ENCODE measurements at regions of chr9 and their contacts with region 1.

Region 1: GRCh38 chr9:8188720-8189407 is 389.3 kb upstream of the DMAC1 start:
- DNase-seq: no peak

Region 2: DNA sequence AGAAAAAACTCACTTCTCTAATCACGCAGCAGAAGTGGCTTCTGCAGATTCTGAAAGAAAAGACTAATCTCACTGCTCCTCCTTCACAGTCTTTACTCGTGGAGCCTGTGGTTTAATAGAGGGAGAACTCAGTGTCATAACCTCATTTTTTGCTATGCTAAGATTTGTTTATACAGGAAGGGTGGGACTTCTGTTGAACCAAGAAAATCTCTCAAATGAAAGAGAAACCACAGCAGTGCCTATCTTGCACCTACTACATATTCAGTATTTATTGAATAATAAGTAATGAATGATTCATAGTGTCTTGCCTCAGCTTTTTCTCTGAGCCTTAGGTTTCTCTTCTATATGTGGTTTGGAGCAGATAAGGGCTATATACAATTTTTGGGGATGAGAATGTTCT is 253.2 kb before region 1 on chr9:
- intact Hi-C with region 1: no loop called
- DNase-seq: no peak

Region 3: DNA sequence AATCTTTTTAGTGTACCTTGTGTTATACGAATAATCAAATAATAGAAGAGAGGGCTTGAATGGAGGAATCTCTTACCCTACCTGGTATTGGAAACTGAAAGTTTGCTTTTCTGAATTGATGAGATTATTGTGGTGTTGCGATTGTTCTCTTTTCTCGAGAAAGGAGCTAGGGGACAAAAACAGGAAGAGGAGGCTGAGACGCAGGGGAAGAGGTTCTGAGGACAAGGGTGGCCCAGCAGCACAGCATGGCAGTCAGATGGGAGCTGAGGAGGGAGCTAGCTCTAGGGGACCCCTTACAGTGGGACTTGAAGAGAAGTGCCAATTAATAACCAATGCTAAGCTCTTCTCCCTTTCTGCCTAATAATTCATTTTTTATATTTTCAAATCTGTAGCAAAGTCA is 206.0 kb before region 1 on chr9:
- intact Hi-C with region 1: loop called (anchors 10 kb)
- DNase-seq: no peak

Region 4: GRCh38 chr9:8508671-8509290 is 319.9 kb after region 1 on chr9:
- intact Hi-C with region 1: no loop called
- DNase-seq: no peak